ENCODE measurements at regions of chr6 and their contacts with region 1.

Region 1: DNA sequence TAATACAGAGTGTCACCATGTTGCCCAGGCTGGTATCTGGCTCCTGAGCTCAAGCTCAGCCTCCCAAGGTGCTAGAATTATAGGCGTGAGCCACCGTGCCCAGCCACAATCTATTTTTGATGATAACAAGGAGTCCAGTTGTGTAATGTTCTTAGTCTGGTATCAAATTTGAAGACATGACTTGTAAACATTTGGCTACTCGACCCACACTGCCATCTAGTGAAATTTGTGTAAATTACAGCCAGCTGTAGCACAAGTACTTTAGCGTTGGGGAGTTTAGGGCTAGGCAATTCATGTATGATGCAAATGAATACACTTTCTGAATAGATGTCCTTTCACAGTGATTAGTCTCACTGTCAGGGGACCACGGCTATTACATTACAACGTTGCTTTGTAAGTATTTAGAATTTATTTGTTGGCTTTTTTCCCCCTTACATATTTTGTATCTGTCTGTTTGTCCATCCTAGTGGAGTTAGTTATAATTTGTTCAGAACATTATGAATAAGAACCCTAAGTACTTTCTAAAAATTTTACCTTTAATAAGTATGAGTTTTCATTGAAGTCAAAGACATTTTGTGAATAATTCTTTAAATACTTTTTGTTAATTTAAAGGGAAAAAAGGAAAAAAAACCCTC is 139.7 kb downstream of the PRDM13 start:
- DNase-seq: peak; percentile 48
- CTCF ChIP-seq: peak; percentile 82

Region 2: GRCh38 chr6:99434702-99435530 is 311.5 kb before region 1 on chr6:
- CTCF ChIA-PET with region 1: interaction called, 13 read pairs
- POLR2A ChIA-PET with region 1: no interaction called
- DNase-seq: peak; percentile 33
- CTCF ChIP-seq: peak; percentile 61

Region 3: DNA sequence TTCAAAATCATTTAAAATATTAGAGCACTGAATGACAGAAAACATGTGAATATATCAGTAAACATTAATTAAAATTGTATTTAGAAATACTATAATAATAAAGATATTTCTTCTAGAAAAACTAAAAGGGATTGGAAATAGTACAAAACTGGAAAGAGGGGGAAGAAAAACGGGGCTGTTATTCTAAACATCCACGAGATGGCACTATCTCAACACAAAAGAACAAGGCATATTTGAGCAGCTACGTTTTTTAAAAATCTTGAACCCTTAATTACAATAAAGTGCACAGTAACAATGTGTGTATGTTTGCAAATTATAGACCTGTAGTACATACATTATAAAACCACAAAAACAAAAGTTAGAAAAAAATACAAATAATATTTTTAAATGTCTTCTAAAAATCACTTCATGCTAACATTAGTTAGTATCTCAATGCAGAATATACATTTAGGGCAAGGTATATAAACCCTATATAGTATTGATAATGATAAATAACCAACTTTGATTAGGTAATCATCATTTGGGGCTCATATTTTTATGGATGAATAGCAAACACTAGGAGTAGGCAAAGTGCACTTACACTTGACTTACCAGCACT is 278.8 kb before region 1 on chr6:
- CTCF ChIA-PET with region 1: interaction called, 34 read pairs
- POLR2A ChIA-PET with region 1: no interaction called
- DNase-seq: peak; percentile 40
- CTCF ChIP-seq: peak; percentile 62

Region 4: DNA sequence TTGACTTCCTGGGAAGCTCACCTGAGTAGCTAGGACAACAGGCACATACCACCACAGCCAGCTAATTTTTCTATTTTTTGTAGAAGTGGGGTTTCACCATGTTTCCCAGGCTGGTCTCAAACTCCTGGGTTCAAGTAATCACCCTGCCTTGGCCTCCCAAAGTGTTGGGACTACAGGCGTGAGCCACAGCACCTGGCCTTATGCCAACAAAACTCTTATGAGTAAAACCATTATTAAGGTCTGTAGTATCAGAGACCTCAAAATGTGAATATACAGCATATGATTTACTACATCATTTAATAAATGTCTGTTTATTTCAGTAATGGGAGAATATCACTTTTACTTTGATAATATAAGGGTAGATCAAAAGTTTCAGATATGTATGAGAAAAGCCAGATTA is 209.9 kb before region 1 on chr6:
- CTCF ChIA-PET with region 1: no interaction called
- POLR2A ChIA-PET with region 1: no interaction called
- DNase-seq: no peak
- CTCF ChIP-seq: no peak

Region 5: GRCh38 chr6:99736302-99736701 is 10.1 kb before region 1 on chr6:
- CTCF ChIA-PET with region 1: interaction called, 28 read pairs
- POLR2A ChIA-PET with region 1: no interaction called
- DNase-seq: no peak
- CTCF ChIP-seq: no peak